ENCODE measurements at regions of chr2 and their contacts with region 1.

Region 1: DNA sequence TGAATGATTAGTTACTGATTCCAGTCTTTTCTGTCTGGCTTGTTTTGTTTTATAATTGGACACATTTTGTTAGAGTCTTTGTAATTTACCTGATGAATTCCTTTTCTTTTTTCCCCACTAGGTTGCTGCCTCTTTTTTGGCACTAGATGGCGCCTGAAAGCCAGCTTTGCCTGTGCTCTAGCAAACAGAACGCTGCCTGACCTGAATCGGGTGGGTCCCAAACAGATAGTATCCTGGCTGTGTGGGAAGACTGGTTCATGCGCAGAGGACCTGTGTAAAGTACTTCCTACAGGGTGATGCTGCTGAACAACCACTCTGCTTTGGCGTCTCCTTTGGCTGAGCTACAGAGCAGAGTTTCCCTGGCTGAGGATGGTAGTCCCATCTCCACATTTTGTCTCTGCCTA is 288.2 kb downstream of the IKZF2 start:
- DNase-seq: no peak

Region 2: GRCh38 chr2:212832211-212833195 is 30.7 kb before region 1 on chr2:
- intact Hi-C with region 1: loop called in 1 of 2 experiments (anchors 1 kb)
- DNase-seq: peak; percentile 78

Measured in posterior vena cava (tissue), 2 donors.